ENCODE measurements at regions of chr1 and their contacts with region 1.

Region 1: DNA sequence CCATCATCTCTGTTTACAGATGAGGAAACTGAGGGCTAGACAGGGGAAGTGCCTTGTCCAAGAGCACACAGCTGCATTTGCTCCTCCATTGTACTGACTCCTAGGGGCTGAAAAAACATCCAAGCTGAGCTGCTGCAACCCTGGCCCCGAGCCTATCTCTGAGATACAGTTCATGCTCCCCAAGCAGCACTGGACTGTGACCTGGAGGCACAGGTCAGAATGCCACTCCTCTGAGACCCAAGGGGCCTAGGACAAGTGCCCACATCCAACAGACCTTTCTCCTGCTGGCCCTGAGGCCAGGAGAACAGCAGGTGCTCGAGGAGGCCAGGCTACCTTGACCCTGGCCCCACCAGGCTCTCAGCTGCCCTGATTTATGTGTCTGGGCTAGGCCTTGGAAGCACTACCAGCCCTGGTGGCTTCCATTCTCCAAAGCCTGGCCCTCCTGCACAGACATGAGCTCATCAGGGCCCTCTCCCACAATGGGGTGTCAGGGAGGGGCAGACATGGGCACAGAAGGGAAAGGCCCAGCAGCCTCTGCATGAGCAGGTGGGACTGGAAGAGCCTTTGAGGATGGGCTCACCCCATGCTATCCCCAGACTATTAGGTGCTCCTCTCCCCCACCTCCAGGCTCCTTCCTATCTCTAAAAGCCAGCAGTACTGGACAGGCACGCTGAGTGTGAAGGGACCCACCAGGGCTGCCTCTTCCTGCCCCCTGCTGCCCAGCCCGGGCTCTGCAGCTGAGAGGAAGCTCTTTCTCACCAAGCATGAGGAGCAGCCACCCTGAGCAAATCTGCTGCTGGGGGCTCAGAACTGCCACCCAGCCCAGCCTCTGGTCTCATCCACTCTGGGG is 18.8 kb downstream of the ADGRB2 start:
- DNase-seq: no peak
- ATAC-seq: peak; percentile 78
- H3K4me3 ChIP-seq: no peak overlapping the region
- H3K27ac ChIP-seq: no peak overlapping the region
- H3K4me1 ChIP-seq: peaks cover 30% of the 10 kb centered on the region
- H3K27me3 ChIP-seq: no peaks in the 10 kb centered on the region
- CTCF ChIP-seq: peak; percentile 86; the same call in 1 of the 2 replicates

Region 2: GRCh38 chr1:31715087-31715872 is 30.0 kb before region 1 on chr1:
- CTCF ChIA-PET with region 1: interaction called, 17 read pairs
- POLR2A ChIA-PET with region 1: no interaction called
- in situ Hi-C with region 1: no loop called
- intact Hi-C with region 1: no loop called
- DNase-seq: peak; percentile 87
- ATAC-seq: peak; percentile 96
- H3K4me3 ChIP-seq: peak overlapping the region; percentile 55 to 78
- H3K27ac ChIP-seq: peak overlapping the region; percentile 86
- H3K4me1 ChIP-seq: peaks cover 44% of the 10 kb centered on the region
- H3K27me3 ChIP-seq: no peaks in the 10 kb centered on the region
- CTCF ChIP-seq: peak; percentile 96